Dendritic cell treated with granulocyte-macrophage colony-stimulating factor and Interleukin-4, amounts not matched to agents 40 ng/mL and 50 ng/mL, for 4 days (primary cell): ENCODE measurements at regions of chr18 and their contacts with region 1.

Region 1: GRCh38 chr18:32048507-32049091 is 30.0 kb downstream of the RNF125 start:
- H3K4me3 Mint-ChIP-seq: no peak overlapping the region
- H3K27ac Mint-ChIP-seq: peak overlapping the region; percentile 90
- H3K4me1 Mint-ChIP-seq: peaks cover 33% of the 10 kb centered on the region
- H3K27me3 Mint-ChIP-seq: no peaks in the 10 kb centered on the region

Region 2: GRCh38 chr18:32018331-32019250 is 30.0 kb before region 1 on chr18 and contains the start of gene RNF125:
- intact Hi-C with region 1: loop called (anchors 2 kb)
- H3K4me3 Mint-ChIP-seq: peak within 1 kb of the TSS; percentile 96
- H3K27ac Mint-ChIP-seq: peak within 1 kb of the TSS; percentile 97
- H3K4me1 Mint-ChIP-seq: peaks cover 33% of the 10 kb centered on the region
- H3K27me3 Mint-ChIP-seq: no peaks in the 10 kb centered on the region

Region 3: DNA sequence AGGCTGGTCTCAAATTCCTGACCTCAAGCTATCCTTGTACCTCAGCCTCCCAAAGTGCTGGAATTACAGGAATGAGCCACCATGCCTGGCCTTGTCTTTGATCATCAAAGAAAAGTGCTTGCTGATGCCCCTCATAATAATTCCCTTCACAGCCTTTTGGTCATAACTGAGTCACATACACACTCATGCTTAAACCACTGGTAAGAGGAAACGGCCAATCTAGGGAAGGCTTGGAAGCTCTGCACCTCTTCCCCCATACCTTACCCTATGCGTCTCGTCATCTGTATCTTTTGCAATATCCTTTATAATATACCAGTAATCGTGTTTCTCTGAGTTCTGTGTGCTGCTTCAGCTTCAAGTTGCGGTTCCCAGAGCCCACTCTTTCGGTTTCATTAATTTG is 38.3 kb after region 1 on chr18:
- intact Hi-C with region 1: loop called (anchors 1 kb)
- H3K4me3 Mint-ChIP-seq: no peak overlapping the region
- H3K27ac Mint-ChIP-seq: peak overlapping the region; percentile 93
- H3K4me1 Mint-ChIP-seq: peaks cover 47% of the 10 kb centered on the region
- H3K27me3 Mint-ChIP-seq: no peaks in the 10 kb centered on the region